CD4-positive, alpha-beta memory T cell (primary cell): ENCODE measurements at regions of chr17 and their contacts with region 1.

Region 1: GRCh38 chr17:32461853-32462617 is 17.7 kb downstream of the PSMD11 start:
- DNase-seq: peak; percentile 62 to 78 (median 65)
- H3K4me3 ChIP-seq: no peak overlapping the region
- H3K4me3 Mint-ChIP-seq: peak overlapping the region in 2 of 8 donors; percentile 20 to 44
- H3K27ac ChIP-seq: no peak overlapping the region
- H3K27ac Mint-ChIP-seq: peak overlapping the region in 6 of 7 donors; percentile 10 to 72 (median 48)
- H3K4me1 ChIP-seq: peaks cover 20% of the 10 kb centered on the region
- H3K4me1 Mint-ChIP-seq: peaks cover 16 to 29% (median 23%) of the 10 kb centered on the region in 4 donors
- H3K27me3 ChIP-seq: no peaks in the 10 kb centered on the region
- H3K27me3 Mint-ChIP-seq: no peaks in the 10 kb centered on the region

Region 2: GRCh38 chr17:32253117-32253611 is 208.9 kb before region 1 on chr17:
- CTCF ChIA-PET with region 1: no interaction called
- POLR2A ChIA-PET with region 1: no interaction called
- intact Hi-C with region 1: loop called (anchors 5 kb)
- DNase-seq: peak; percentile 41 to 62 (median 50)
- H3K4me3 ChIP-seq: no peak overlapping the region
- H3K4me3 Mint-ChIP-seq: no peak overlapping the region
- H3K27ac ChIP-seq: no peak overlapping the region
- H3K27ac Mint-ChIP-seq: no peak overlapping the region
- H3K4me1 ChIP-seq: no peaks in the 10 kb centered on the region
- H3K4me1 Mint-ChIP-seq: no peaks in the 10 kb centered on the region
- H3K27me3 ChIP-seq: no peaks in the 10 kb centered on the region
- H3K27me3 Mint-ChIP-seq: peaks cover 1 to 2% of the 10 kb centered on the region in 2 donors

Region 3: DNA sequence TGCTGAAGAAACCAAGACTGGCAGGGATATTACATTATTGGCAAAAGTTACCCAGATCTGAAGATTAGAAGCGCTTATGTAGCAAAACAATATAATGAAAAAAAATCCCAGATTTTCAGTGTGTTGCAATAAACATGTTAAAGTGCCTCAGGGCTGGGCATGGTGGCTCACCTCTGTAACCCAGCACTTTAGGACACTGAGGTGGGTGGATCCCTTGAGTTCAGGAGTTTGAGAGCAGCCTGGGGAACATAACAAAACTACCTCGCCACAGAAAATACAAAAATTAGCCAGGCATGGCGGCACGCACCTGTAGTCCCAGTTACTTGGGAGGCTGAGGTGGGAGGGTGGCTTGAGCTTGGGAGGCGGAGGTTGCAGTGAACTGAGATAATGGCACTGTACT is 105.3 kb before region 1 on chr17:
- CTCF ChIA-PET with region 1: no interaction called
- POLR2A ChIA-PET with region 1: no interaction called
- intact Hi-C with region 1: no loop called
- DNase-seq: no peak
- H3K4me3 ChIP-seq: no peak overlapping the region
- H3K4me3 Mint-ChIP-seq: peak overlapping the region; percentile 8 to 62 (median 36)
- H3K27ac ChIP-seq: no peak overlapping the region
- H3K27ac Mint-ChIP-seq: peak overlapping the region in 5 of 7 donors; percentile 2 to 60 (median 37)
- H3K4me1 ChIP-seq: peaks cover 67% of the 10 kb centered on the region
- H3K4me1 Mint-ChIP-seq: peaks cover 35 to 68% (median 48%) of the 10 kb centered on the region in 4 donors
- H3K27me3 ChIP-seq: no peaks in the 10 kb centered on the region
- H3K27me3 Mint-ChIP-seq: no peaks in the 10 kb centered on the region

Region 4: DNA sequence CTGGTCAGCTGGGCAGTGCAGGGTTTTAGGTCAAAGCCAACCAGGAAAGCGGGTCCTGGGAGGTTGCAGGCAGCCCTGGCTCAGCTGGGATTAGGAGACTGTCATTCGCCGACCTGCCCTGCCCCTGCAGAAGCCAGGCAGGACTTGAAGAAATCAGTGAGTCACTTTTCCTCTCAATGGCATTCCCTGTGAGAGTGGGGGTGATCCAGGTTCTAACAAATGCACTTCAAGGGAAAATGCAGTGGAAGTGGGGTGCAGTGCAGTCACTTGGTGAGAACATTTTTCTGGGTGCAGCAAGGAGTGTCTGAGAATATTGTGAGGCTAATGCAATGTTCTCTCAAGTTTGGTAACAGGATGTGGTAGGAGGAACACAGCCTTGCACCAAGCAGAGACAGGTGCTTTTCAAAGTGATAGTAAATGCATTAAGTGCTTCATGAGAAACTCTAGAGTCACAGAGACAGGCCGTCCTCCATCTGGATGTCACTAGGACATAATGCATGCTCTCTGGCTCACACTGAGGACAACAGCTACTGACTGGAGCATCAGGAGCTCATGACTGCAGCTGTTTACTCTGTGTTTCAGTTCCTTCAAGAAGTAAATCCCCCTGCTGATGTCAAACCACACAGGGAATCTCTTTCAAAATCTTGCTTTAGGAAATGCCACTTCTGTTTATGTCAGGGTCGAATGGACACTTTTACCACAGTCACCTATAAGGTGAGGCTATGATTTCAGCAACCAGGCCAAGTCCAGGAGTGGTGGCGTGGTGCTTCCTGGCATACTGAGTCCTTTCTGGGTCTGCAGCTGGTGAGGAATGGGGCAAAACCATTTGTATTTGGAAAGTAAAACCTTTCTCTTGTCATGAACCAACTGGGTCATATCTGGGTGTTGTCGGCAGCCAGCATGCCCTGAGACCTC is 41.5 kb after region 1 on chr17:
- CTCF ChIA-PET with region 1: interaction called, 11 read pairs
- POLR2A ChIA-PET with region 1: no interaction called
- intact Hi-C with region 1: no loop called
- DNase-seq: peak; percentile 64 to 77 (median 74)
- H3K4me3 ChIP-seq: peak overlapping the region; percentile 4 to 16
- H3K4me3 Mint-ChIP-seq: peak overlapping the region; percentile 66 to 88 (median 79)
- H3K27ac ChIP-seq: peak overlapping the region; percentile 73
- H3K27ac Mint-ChIP-seq: peak overlapping the region; percentile 95 to 99 (median 96)
- H3K4me1 ChIP-seq: peaks cover 70% of the 10 kb centered on the region
- H3K4me1 Mint-ChIP-seq: peaks cover 46 to 69% (median 59%) of the 10 kb centered on the region in 4 donors
- H3K27me3 ChIP-seq: no peaks in the 10 kb centered on the region
- H3K27me3 Mint-ChIP-seq: no peaks in the 10 kb centered on the region

Region 5: GRCh38 chr17:32519228-32520103 is 57.4 kb after region 1 on chr17:
- CTCF ChIA-PET with region 1: interaction called, 52 read pairs
- POLR2A ChIA-PET with region 1: interaction called, 3 read pairs
- intact Hi-C with region 1: no loop called
- DNase-seq: peak; percentile 50 to 85 (median 54)
- H3K4me3 ChIP-seq: peak overlapping the region in 1 of 2 donors; percentile 33
- H3K4me3 Mint-ChIP-seq: peak overlapping the region; percentile 78 to 96 (median 88)
- H3K27ac ChIP-seq: peak overlapping the region; percentile 48
- H3K27ac Mint-ChIP-seq: peak overlapping the region; percentile 90 to 98 (median 95)
- H3K4me1 ChIP-seq: peaks cover 73% of the 10 kb centered on the region
- H3K4me1 Mint-ChIP-seq: peaks cover 54 to 82% (median 67%) of the 10 kb centered on the region in 4 donors
- H3K27me3 ChIP-seq: no peaks in the 10 kb centered on the region
- H3K27me3 Mint-ChIP-seq: no peaks in the 10 kb centered on the region

Region 6: DNA sequence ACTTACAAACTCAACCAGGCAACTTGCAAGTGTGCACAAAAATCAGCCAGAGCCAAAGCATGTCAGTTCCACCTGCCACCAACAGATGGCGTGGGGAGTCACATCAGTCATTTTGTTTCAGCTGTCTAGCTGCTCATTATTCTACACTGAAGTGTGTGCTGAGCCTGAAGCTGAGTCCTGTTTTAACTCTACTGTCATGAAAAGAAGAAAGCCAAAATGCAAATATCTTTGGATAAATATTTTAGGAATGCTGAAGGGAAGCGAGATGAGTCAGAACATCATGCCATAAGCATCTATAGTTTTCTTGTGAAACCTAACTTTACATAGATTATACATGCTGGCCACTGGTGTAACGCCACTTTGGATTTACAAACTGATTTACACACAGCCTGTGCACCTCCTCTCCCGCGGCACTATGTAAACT is 197.4 kb after region 1 on chr17:
- CTCF ChIA-PET with region 1: interaction called, 20 read pairs
- POLR2A ChIA-PET with region 1: no interaction called
- intact Hi-C with region 1: no loop called
- DNase-seq: peak; percentile 38 to 49 (median 46)
- H3K4me3 ChIP-seq: no peak overlapping the region
- H3K4me3 Mint-ChIP-seq: no peak overlapping the region
- H3K27ac ChIP-seq: no peak overlapping the region
- H3K27ac Mint-ChIP-seq: no peak overlapping the region
- H3K4me1 ChIP-seq: no peaks in the 10 kb centered on the region
- H3K4me1 Mint-ChIP-seq: no peaks in the 10 kb centered on the region
- H3K27me3 ChIP-seq: no peaks in the 10 kb centered on the region
- H3K27me3 Mint-ChIP-seq: no peaks in the 10 kb centered on the region